ENCODE measurements at regions of chr5 and their contacts with region 1.

Region 1: DNA sequence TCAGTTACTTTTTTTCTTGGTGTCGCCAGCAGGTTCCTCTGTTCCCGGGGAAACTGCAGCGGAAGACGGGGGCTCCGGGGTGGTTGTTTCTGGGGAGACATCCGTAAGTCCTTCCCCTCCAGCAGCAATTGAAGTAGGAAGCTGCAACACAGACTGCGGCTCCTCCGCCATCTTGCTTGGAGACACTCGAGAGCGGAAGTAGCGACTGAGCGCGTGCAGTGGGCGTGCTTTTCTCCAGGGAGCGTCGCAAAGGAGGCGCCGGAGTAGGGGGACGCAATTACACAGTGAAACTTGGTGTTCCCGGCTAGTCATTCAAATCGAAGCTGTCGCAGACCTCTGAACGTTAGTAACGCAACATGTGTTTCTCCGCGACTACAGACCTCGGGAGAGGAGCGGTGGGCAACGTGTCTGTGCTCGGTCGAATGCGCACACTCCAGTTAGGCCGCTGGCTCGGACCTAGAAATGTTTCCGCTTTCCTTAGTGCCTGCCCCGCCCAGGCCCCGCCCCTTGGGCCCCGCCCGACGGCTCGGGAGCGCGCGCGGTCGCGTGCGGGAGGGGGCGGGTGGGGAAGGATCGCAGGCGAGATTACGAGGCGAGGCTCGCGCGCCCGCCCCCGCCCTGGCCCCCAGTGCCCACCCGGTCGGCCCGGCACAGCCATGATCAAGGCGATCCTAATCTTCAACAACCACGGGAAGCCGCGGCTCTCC is at the starts of genes AP3S1 and ATG12:
- DNase-seq: peak; percentile 92 to 95
- ATAC-seq: peak; percentile 95 to 96 (median 96)
- H3K4me3 ChIP-seq: peak within 1 kb of the TSS; percentile 87
- H3K27ac ChIP-seq: peak within 1 kb of the TSS; percentile 96
- H3K4me1 ChIP-seq: peaks cover 53% of the 10 kb centered on the region
- H3K27me3 ChIP-seq: no peaks in the 10 kb centered on the region
- CTCF ChIP-seq: no peak
- total RNA-seq, gene AP3S1: 20.2 to 29.6 (median 26.3) TPM
- total RNA-seq, gene ATG12: 20.3 to 32.8 (median 27.1) TPM

Region 2: DNA sequence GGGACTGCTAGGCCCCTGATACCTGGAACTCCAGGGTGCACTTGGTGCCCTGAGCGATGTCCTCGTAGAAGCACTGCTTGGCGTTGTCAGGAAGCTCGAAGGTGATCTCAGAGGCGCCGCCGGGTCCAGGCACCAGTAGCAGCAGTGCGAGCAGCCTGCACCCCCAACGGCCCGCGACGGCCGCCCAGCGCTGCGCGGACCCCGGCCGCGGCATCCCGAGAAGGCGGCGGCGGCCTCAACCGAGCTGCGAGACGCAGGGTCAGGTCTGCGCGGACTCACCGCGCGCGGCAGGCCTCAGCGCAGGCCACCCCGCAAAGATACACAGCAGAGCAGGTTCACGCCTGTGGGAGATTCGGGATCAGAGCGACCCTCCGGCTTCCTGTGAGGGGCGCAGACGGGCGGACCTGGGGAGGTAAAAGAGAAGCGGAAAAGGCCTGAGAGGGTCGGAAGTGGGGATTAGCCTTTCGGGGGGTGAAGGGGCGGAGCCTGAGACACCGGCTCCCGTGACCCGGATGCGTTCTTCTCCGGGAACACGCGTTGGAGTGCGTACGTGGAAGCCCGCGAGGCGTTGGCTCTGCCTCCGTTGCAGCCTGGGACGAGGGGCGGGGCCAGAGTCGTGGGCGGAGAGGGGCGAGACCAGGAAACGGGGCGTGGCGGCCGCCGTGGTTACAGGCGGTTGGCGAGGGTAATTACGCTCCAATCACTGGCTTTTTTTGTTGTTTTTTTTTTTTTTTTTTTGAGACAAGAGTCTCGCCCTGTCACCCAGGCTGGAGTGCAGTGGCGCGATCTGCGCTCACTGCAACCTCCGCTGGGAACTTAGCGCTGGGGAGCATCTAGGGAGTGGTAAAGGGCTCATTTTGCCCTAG is 215.7 kb before region 1 on chr5 and contains the start of gene TMED7:
- intact Hi-C with region 1: loop called (anchors 5 kb)
- DNase-seq: peak; percentile 100
- ATAC-seq: peak; percentile 99
- H3K4me3 ChIP-seq: peak within 1 kb of the TSS; percentile 87
- H3K27ac ChIP-seq: peak within 1 kb of the TSS; percentile 98
- H3K4me1 ChIP-seq: peaks cover 33% of the 10 kb centered on the region
- H3K27me3 ChIP-seq: no peaks in the 10 kb centered on the region
- CTCF ChIP-seq: peak; percentile 9
- total RNA-seq, gene TMED7: 34.2 to 59.0 (median 40.6) TPM

Region 3: GRCh38 chr5:115798252-115798651 is 43.3 kb before region 1 on chr5:
- intact Hi-C with region 1: no loop called
- DNase-seq: no peak
- ATAC-seq: peak in 1 of 4 donors; percentile 44
- H3K4me3 ChIP-seq: no peak overlapping the region
- H3K27ac ChIP-seq: no peak overlapping the region
- H3K4me1 ChIP-seq: no peaks in the 10 kb centered on the region
- H3K27me3 ChIP-seq: no peaks in the 10 kb centered on the region
- CTCF ChIP-seq: no peak

Region 4: DNA sequence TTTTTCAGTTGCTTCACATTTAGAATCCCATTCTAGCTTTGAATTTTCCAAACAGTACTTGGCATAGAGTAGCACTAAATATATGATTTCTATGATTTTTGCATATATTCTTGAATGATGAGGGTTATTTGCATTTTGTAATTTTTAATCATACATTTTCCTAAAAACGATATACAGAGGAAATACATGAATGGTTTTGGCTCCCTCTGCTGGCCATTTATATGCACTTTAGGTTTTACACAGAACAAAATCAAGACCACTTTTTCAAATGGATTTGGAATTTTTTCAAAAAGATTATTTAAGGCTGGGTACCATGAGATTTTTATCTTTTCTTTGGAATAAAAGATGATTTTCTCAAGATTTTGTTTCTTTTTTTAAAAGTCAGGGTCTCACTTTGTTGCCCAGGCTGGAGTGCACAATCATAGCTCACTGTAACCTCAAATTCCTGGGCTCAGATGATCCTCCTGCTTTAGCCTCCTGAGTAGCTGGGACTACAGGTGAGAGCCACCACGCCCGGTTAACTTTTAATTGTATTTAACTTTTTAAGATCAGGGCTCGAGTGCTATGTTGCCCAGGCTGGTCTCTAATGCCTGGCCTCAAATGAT is 226.6 kb after region 1 on chr5:
- intact Hi-C with region 1: loop called in 1 of 2 experiments (anchors 5 kb)
- DNase-seq: no peak
- ATAC-seq: peak in 1 of 4 donors; percentile 72
- H3K4me3 ChIP-seq: no peak overlapping the region
- H3K27ac ChIP-seq: no peak overlapping the region
- H3K4me1 ChIP-seq: no peaks in the 10 kb centered on the region
- H3K27me3 ChIP-seq: no peaks in the 10 kb centered on the region
- CTCF ChIP-seq: peak; percentile 86

Region 5: DNA sequence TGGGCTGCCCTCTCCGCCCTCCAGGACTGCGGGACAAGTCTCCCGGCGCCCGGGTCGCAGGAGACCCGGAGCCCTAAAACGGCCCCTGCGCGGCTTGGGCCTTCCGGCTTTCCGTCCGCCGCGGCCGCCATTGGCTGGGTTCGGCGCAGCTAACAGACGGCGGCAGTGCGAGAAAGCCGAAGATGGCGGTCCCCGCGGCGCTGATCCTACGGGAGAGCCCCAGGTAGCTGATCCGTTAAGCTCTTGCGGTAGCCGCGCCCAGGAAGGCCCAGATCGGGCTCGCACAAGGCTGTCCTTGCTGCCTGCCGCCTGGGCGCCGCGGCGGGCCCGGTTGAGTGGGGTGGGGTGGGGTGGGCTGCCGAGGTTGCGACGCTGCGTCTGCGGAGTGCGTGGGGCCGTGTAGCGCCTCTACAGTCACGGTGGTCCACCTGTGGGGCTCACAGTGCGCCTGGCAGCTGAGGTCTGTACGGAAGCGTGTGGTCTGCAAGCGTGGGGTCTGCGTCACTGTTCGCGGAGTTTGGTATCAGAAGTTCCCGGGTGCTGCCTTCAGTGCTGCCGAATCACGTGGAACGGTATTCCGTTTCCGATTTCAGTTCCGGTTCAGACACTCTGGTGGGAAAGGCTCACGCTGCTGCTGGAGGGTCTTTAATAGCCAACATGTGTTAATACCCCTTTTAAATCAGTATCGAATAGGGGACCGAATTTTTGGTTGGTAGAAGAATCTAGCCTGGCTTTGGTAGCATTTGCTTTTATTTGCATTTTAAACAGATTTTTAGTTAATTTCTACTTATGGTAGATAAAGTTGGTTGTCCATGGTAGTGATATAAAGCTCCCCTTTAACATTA is 243.6 kb after region 1 on chr5 and contains the start of gene COMMD10:
- intact Hi-C with region 1: loop called in 1 of 2 experiments (anchors 10 kb)
- DNase-seq: peak; percentile 82 to 87
- ATAC-seq: peak; percentile 96
- H3K4me3 ChIP-seq: peak within 1 kb of the TSS; percentile 87
- H3K27ac ChIP-seq: peak within 1 kb of the TSS; percentile 97
- H3K4me1 ChIP-seq: peaks cover 8% of the 10 kb centered on the region
- H3K27me3 ChIP-seq: no peaks in the 10 kb centered on the region
- CTCF ChIP-seq: no peak
- total RNA-seq, gene COMMD10: 15.0 to 21.8 (median 17.9) TPM

Measured in psoas muscle (tissue), 8 donors.